Activated CD8-positive, alpha-beta T cell treated with anti-CD3 and anti-CD28 coated beads, Interleukin-2, amount 10 ng/mL, durations not matched to agents 7 days and 5 days (primary cell): ENCODE measurements at regions of chr19 and their contacts with region 1.

Region 1: DNA sequence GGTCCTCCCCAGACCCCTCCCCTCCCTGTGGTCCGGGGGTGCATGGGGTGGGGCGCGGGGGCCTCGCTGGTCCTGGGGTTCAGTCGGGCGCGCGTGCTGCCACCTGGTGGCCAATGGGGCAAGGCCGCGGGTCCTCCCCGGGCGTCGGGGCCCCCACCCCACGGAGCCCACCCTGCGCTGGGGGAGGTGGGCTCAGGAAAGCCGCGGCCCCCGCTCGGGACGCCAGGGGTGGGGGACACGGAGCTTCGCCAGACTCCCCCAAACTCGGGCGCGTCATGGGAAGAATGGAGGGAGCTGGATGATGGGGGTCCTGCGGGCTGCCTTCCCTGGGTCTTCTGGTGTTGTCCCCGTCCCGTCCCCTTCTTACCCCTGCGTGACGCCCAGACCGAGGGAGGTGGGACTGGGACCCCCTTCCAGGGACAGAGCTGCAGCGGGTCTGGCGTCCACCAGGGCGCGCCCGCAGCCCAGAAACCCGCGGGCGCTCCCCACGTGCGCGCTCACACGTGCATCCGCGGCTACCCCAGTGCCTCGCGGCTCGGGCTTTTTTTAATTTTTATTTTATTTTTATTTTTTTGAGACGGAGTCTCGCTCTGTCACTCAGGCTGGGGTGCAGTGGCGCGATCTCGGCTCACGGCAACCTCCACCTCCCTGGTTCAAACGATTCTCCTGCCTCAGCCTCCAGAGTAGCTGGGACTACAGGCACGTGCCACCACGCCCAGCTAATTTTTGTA is 19.8 kb upstream of the TCF3 start:
- DNase-seq: peak; percentile 60
- ATAC-seq: peak; percentile 65
- H3K4me3 Mint-ChIP-seq: no peak overlapping the region
- H3K27ac Mint-ChIP-seq: no peak overlapping the region
- H3K4me1 Mint-ChIP-seq: peaks cover 10% of the 10 kb centered on the region
- H3K27me3 Mint-ChIP-seq: peaks cover 48% of the 10 kb centered on the region

Region 2: GRCh38 chr19:1540365-1540925 is 131.8 kb before region 1 on chr19:
- CTCF ChIA-PET with region 1: interaction called, 31 read pairs
- POLR2A ChIA-PET with region 1: no interaction called
- DNase-seq: no peak
- ATAC-seq: no peak
- H3K4me3 Mint-ChIP-seq: no peak overlapping the region
- H3K27ac Mint-ChIP-seq: no peak overlapping the region
- H3K4me1 Mint-ChIP-seq: no peaks in the 10 kb centered on the region
- H3K27me3 Mint-ChIP-seq: peaks cover 11% of the 10 kb centered on the region

Region 3: DNA sequence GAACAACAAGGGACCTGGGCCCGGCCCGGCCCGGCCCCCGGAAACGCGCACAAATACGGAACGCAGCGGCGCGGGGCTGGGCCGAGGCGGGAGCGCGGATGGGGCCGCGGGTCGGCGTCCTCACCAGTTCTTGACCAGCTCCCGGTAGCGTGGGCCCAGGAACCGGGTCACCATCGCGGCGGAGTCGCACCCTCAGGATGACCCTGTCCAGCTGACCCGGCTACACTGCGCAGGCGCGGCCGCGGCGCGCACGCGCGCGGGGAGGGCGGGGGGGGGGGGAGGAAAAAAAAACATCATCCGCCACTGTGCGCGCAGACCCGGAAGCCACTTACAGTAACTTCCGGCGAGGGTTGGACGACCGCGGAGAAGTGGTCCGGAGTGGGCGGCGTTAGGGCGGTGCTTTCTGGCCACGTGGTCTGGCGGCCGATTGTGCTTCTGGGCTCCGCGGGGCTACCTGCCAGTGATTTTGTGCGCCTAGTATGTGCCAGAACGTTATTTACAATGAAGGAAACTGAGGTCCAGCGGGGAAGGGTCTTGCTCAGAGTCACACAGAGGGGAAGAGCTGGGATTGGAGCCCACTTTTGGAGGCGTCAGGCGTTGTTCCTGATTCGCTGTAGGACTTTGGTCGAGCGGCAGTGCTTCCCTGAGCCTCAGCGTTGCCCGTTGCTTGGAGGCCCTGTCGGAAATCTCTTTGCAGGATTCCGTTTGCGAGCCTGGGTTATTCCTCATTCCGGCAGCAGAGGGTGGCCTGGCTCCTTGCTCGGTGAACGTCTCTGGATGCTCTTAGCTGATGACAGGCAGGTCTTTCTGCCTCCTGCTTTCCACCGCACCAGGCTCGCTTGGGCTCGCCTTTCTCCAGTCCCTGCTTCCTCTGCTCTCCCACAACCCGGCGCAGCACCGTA is 66.7 kb before region 1 on chr19 and contains the start of gene UQCR11:
- CTCF ChIA-PET with region 1: interaction called, 16 read pairs
- POLR2A ChIA-PET with region 1: interaction called, 3 read pairs
- DNase-seq: peak; percentile 96
- ATAC-seq: peak; percentile 88
- H3K4me3 Mint-ChIP-seq: peak within 1 kb of the TSS; percentile 81
- H3K27ac Mint-ChIP-seq: peak within 1 kb of the TSS; percentile 96
- H3K4me1 Mint-ChIP-seq: peaks cover 56% of the 10 kb centered on the region
- H3K27me3 Mint-ChIP-seq: no peaks in the 10 kb centered on the region
- total RNA-seq, gene UQCR11: 180 to 195 TPM

Region 4: GRCh38 chr19:1661995-1662394 is 10.2 kb before region 1 on chr19:
- CTCF ChIA-PET with region 1: interaction called, 10 read pairs
- POLR2A ChIA-PET with region 1: no interaction called
- DNase-seq: no peak
- ATAC-seq: no peak
- H3K4me3 Mint-ChIP-seq: no peak overlapping the region
- H3K27ac Mint-ChIP-seq: no peak overlapping the region
- H3K4me1 Mint-ChIP-seq: peaks cover 7% of the 10 kb centered on the region
- H3K27me3 Mint-ChIP-seq: peaks cover 2% of the 10 kb centered on the region

Region 5: DNA sequence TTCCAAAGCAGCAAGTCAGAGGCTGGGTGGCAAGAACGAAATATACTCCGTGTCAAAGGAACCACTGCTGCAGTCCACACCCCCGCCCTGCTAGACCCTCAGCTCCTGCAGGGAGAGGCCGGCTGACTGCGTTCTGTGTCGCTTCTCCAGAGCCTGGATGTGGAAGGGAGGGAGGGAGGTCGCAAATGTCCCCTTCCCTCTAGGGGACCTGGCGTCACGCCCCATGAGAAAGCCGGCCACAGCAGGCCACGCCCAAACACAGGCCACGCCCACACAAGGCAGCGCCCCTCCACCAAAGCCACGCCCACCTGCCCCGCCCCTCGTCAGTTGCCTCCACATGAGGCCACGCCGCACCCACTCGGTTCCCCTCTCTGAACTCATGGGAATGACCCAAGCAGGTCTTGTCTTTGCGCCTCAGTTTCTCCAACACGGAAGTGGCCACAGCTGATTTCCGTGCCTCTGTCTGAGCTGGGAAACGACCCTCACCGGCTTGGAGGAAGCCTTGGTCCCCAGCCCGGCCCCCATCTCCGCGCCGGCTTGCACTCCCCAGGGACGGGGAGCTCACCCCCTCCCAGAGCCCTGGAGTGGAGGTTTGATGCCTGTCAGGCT is 18.6 kb after region 1 on chr19:
- CTCF ChIA-PET with region 1: no interaction called
- POLR2A ChIA-PET with region 1: no interaction called
- DNase-seq: peak; percentile 75
- ATAC-seq: peak; percentile 65
- H3K4me3 Mint-ChIP-seq: no peak overlapping the region
- H3K27ac Mint-ChIP-seq: no peak overlapping the region
- H3K4me1 Mint-ChIP-seq: peaks cover 2% of the 10 kb centered on the region
- H3K27me3 Mint-ChIP-seq: peaks cover 7% of the 10 kb centered on the region